Activated naive CD4-positive, alpha-beta T cell treated with anti-CD3 and anti-CD28 coated beads for 36 hours (primary cell): ENCODE measurements at regions of chrX and their contacts with region 1.

Region 1: DNA sequence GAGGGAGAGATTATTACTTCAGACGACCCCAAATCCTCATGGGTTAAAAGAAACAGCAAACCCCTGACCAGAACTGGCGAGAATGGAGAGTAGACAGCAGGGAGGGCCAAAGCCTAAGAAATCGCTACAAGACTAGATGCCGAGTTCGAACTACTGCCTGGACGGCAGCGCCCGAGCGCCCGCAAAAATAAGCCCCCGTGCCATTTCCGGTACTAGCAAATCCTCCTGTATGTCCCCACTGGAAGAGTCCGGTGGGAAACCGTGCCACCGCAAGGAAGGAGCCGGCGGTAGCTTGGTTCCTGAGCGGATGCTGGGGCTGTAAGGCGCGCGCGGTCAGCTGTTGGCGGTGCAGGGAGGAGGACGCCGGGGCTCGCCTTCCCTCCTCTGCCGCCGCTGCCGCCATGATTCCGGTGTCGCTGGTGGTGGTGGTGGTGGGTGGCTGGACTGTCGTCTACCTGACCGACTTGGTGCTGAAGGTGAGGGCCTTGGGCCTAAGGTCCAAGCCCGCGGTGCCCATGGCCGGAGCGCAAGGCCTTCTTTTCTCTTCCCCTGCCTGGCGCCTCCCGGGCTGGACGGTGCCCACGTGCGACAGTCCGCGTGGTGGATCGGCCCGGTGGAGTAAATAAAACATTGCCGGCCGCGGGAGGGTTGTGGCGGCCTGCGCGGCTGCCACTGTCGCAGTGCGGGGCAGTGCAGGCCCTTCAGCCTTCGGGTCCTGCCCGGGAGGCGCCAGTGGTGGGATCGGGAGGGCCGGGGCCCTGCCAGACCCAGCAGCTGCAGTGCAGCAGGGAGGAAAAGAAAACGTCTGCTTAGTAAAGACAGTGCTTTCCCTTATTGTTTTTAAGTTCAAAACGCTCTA is at the start of gene MBTPS2:
- DNase-seq: peak; percentile 86
- H3K4me3 Mint-ChIP-seq: peak within 1 kb of the TSS; percentile 81
- H3K27ac Mint-ChIP-seq: peak within 1 kb of the TSS; percentile 92
- H3K4me1 Mint-ChIP-seq: peaks cover 9% of the 10 kb centered on the region
- H3K27me3 Mint-ChIP-seq: no peaks in the 10 kb centered on the region
- total RNA-seq, gene MBTPS2: 4.7 to 5.4 TPM

Region 2: DNA sequence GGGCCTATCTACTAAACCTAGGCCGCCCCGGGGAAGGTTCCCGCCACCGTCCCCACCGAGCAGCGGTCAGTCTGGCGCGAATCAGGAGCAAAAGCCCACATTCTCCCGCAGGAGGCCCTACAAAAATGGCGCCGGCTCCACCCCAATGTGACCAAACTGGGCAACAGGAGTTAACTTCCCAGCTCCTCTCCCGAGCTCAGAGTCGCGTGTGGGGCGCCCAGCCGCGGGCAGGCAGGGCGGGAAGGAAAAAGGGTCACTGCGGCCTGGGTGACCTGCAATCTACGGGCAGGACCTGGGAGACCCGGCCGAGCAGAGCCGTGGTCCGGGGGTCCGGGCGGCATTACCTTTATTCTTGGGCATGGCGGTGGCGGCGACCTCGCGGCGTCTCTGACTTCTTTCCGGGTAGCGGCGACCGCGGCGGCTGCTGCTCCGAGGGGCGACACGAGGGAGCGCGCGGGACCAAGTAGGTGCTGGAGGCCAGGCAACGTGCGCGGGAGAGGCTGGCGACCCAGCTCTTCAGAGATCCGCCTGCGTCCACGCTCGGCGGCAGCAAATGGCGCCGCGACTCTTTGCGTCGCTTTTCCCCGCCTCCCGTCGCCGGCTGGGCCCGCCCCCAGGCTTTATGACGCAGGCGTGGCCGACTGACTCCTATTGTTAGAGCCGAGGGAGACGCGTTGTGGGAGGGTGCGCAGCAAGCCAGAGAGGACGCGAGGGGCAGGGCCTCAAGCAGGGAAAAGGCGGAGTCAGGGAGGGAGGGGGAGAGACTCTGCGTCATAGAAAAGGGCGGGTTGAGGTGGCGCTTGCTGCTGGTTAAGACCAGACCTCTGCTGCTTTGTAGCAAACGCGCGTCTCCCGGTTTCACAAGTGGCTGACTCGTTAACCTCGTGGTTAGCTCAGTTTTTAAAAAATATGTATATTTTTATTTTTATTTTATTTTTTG is 1698.0 kb before region 1 on chrX and contains the start of gene EIF1AX:
- CTCF ChIA-PET with region 1: no interaction called
- intact Hi-C with region 1: loop called (anchors 5 kb)
- DNase-seq: peak; percentile 97
- H3K4me3 Mint-ChIP-seq: peak within 1 kb of the TSS; percentile 81
- H3K27ac Mint-ChIP-seq: peak within 1 kb of the TSS; percentile 80
- H3K4me1 Mint-ChIP-seq: peaks cover 38% of the 10 kb centered on the region
- H3K27me3 Mint-ChIP-seq: no peaks in the 10 kb centered on the region
- total RNA-seq, gene EIF1AX: 106 to 109 TPM

Region 3: GRCh38 chrX:21658152-21658737 is 181.3 kb before region 1 on chrX and contains the start of gene KLHL34:
- CTCF ChIA-PET with region 1: no interaction called
- intact Hi-C with region 1: loop called (anchors 2 kb)
- DNase-seq: peak; percentile 26
- H3K4me3 Mint-ChIP-seq: peak within 1 kb of the TSS; percentile 67
- H3K27ac Mint-ChIP-seq: no peak within 1 kb of the TSS
- H3K4me1 Mint-ChIP-seq: peaks cover 11% of the 10 kb centered on the region
- H3K27me3 Mint-ChIP-seq: no peaks in the 10 kb centered on the region
- total RNA-seq, gene KLHL34: 1.1 to 1.2 TPM

Region 4: GRCh38 chrX:21940356-21940829 is 100.8 kb after region 1 on chrX and contains the start of gene SMS:
- CTCF ChIA-PET with region 1: no interaction called
- intact Hi-C with region 1: loop called (anchors 1 kb)
- DNase-seq: peak; percentile 58
- H3K4me3 Mint-ChIP-seq: peak within 1 kb of the TSS; percentile 85
- H3K27ac Mint-ChIP-seq: peak within 1 kb of the TSS; percentile 90
- H3K4me1 Mint-ChIP-seq: peaks cover 28% of the 10 kb centered on the region
- H3K27me3 Mint-ChIP-seq: no peaks in the 10 kb centered on the region
- total RNA-seq, gene SMS: 148 to 156 TPM

Region 5: DNA sequence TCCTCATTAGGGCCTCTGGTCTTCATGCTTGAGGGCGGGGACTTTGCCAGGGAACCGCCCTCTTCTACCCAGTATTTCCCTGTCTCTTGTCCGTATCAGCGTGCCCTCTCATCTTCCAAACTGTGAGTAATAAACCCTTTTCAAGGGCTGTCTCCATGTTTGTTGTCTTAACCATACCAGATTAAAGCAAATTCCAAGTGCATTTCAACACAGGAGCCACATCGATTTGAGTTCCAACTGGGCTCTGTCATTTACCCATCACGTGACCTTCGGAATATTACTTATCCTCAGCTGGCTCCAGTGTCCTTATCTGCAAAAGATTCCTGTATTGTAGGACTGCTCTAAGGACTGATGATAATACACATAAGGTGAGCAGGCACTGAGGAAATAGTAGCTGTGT is 186.2 kb after region 1 on chrX:
- CTCF ChIA-PET with region 1: no interaction called
- intact Hi-C with region 1: no loop called
- DNase-seq: no peak
- H3K4me3 Mint-ChIP-seq: no peak overlapping the region
- H3K27ac Mint-ChIP-seq: no peak overlapping the region
- H3K4me1 Mint-ChIP-seq: peaks cover 14% of the 10 kb centered on the region
- H3K27me3 Mint-ChIP-seq: no peaks in the 10 kb centered on the region

Region 6: GRCh38 chrX:22063284-22063683 is 223.7 kb after region 1 on chrX:
- CTCF ChIA-PET with region 1: no interaction called
- intact Hi-C with region 1: loop called (anchors 1 kb)
- DNase-seq: peak; percentile 32
- H3K4me3 Mint-ChIP-seq: no peak overlapping the region
- H3K27ac Mint-ChIP-seq: peak overlapping the region; percentile 60
- H3K4me1 Mint-ChIP-seq: peaks cover 77% of the 10 kb centered on the region
- H3K27me3 Mint-ChIP-seq: no peaks in the 10 kb centered on the region

Region 7: GRCh38 chrX:22192417-22193060 is 353.0 kb after region 1 on chrX:
- CTCF ChIA-PET with region 1: no interaction called
- intact Hi-C with region 1: loop called (anchors 1 kb)
- DNase-seq: peak; percentile 71
- H3K4me3 Mint-ChIP-seq: no peak overlapping the region
- H3K27ac Mint-ChIP-seq: no peak overlapping the region
- H3K4me1 Mint-ChIP-seq: peaks cover 3% of the 10 kb centered on the region
- H3K27me3 Mint-ChIP-seq: no peaks in the 10 kb centered on the region

Region 8: DNA sequence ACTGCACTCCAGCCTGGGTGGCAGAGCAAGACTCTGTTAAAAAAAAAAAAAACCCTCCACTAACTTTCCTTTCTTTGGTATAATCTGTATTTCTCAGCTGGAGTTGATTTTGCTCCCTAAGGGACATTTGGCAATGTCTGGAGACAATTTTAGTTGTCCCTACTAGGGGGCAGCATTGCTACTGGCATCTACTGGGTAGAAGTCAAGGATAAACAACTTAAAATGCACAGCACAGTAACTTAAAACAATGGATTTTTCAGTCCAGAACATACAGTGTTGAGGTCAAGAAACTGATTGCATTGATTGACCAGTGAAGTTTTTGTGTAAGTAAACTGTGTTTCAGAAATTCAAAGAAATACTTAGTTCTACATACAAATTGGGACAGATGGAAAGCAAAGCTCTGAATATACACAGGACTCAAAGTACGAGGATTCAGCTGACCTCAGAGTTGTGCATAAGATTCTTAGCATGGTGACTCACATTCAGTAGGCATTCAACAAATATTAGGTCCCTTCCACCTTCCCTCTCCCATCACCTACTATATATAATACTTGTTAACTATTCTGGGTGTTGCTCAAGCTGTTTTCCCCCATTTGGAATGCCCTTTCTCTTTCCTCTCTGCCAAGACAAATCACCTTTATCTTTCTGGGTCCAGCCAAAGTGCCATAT is 1169.0 kb after region 1 on chrX:
- CTCF ChIA-PET with region 1: no interaction called
- intact Hi-C with region 1: loop called (anchors 10 kb)
- DNase-seq: no peak
- H3K4me3 Mint-ChIP-seq: no peak overlapping the region
- H3K27ac Mint-ChIP-seq: no peak overlapping the region
- H3K4me1 Mint-ChIP-seq: peaks cover 10% of the 10 kb centered on the region
- H3K27me3 Mint-ChIP-seq: no peaks in the 10 kb centered on the region